AG04450 (cell line): ENCODE measurements at regions of chr7 and their contacts with region 1.

Region 1: GRCh38 chr7:140517546-140518369 is 38.5 kb upstream of the MKRN1 start:
- DNase-seq: peak; percentile 72
- H3K4me3 ChIP-seq: no peak overlapping the region
- H3K27ac ChIP-seq: no peak overlapping the region
- H3K27me3 ChIP-seq: no peaks in the 10 kb centered on the region
- CTCF ChIP-seq: peak; percentile 89

Region 2: DNA sequence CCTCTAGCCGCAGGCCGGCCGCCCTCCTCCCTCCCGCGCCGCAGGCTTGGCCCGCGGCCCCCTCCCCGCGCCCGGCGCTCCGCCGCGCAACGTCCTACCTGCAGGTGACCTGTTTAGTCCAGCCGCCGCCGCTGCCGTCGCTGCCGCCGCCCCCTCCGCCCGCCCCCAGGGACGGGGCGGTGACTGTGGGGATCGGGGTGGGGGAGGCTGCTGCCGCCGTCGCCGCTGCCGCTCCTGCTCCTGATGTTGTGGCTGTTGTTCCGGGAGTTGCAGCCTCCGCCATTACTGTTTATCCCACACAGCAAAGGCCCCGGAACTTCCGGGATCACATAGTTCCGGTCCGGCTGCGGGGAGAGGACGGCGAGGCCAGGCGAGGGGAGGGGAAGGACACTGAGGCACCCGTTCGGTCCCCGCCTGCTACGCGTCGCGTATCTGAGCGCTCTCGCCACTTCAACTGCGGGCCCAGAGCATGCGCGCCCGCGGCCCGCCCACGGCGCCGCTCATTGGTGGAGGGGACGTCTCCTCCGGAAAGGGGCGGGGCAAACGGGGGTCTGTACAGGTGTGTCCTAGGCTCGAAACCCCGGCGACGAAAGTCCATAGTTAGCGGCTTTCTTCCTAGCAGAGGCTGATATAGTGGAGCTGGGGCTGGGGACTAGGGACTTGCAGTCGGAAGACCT is 38.6 kb before region 1 on chr7 and contains the start of gene MKRN1:
- CTCF ChIA-PET with region 1: interaction called, 19 read pairs
- POLR2A ChIA-PET with region 1: no interaction called
- DNase-seq: peak; percentile 67
- H3K4me3 ChIP-seq: peak within 1 kb of the TSS; percentile 78
- H3K27ac ChIP-seq: peak within 1 kb of the TSS; percentile 70
- H3K27me3 ChIP-seq: peaks cover 5% of the 10 kb centered on the region
- CTCF ChIP-seq: no peak
- polyA plus RNA-seq, gene MKRN1: 63.7 and 71.6 TPM in 2 replicates

Region 3: DNA sequence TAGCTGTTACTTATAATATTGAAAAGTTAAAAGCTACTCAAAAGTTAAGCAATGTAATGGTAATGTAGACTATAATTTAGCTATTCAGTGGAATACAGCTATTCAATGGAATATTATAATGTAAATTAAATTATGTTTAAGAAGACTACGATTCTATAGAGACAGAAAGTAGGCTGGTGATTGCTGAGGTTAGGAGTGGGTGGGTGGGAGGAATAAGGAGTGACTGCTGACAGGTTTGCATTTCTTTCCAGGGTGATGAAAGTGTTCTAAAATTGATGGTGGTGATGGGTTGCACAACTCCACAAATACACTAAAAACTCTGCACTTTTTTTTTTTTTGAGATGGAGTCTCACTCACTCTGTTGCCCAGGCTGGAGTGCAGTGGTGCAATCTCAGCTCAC is 101.4 kb after region 1 on chr7:
- CTCF ChIA-PET with region 1: interaction called, 4 read pairs
- POLR2A ChIA-PET with region 1: interaction called, 11 read pairs
- DNase-seq: no peak
- H3K4me3 ChIP-seq: no peak overlapping the region
- H3K27ac ChIP-seq: no peak overlapping the region
- H3K27me3 ChIP-seq: no peaks in the 10 kb centered on the region
- CTCF ChIP-seq: no peak

Region 4: GRCh38 chr7:140653319-140654108 is 135.8 kb after region 1 on chr7:
- CTCF ChIA-PET with region 1: interaction called, 44 read pairs
- POLR2A ChIA-PET with region 1: no interaction called
- DNase-seq: peak; percentile 83
- H3K4me3 ChIP-seq: no peak overlapping the region
- H3K27ac ChIP-seq: no peak overlapping the region
- H3K27me3 ChIP-seq: no peaks in the 10 kb centered on the region
- CTCF ChIP-seq: peak; percentile 90